Sigmoid colon (tissue), 7 donors: ENCODE measurements at regions of chr22 and their contacts with region 1.

Region 1: DNA sequence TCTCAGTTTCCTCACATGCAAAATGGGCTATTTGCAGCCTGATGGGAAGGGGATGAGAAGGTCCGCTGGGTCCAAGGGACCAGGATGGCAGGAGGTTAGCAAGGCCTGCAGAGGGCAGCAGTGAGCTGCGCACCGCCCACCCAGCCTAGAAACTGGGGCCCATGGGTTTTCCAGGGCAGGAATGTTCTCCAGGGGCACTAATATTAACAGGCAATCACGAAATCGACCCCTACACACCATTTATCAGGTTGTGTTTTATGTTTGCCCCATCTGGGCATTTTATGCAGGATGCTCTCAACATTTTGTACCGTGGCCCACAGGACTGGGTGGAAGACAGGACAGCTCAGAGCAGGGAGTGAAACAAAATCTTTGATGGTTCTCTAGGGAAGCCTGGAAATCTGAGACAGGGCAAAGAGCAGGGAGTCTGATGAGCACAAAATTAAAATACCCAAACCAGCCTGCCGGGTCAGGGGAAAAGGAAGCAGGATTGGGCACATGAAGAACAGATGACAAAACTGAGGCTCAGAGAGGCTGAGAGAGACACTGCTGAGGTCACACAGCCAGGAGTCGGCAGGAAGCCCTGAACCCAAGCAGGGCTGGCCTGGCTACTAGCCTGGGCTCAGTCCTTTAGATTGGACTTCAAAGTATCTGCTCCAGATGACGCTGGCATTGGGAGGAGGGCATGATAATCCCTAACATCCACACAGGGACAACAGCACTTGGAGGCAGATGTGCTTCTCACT is 1.6 kb upstream of the BCR start:
- DNase-seq: peak; percentile 83
- H3K4me3 ChIP-seq: no peak overlapping the region
- H3K27ac ChIP-seq: peak overlapping the region; percentile 81 to 86 (median 85)
- H3K4me1 ChIP-seq: peaks cover 0 to 51% (median 43%) of the 10 kb centered on the region in 4 donors
- H3K27me3 ChIP-seq: no peaks in the 10 kb centered on the region
- CTCF ChIP-seq: peak; percentile 91 to 96 (median 96)
- EP300 ChIP-seq: no peak
- POLR2A ChIP-seq: no peak

Region 2: GRCh38 chr22:23204541-23205157 is 26.0 kb after region 1 on chr22:
- intact Hi-C with region 1: no loop called
- DNase-seq: peak; percentile 79
- H3K4me3 ChIP-seq: no peak overlapping the region
- H3K27ac ChIP-seq: peak overlapping the region; percentile 45 to 72 (median 64)
- H3K4me1 ChIP-seq: peaks cover 0 to 33% (median 24%) of the 10 kb centered on the region in 4 donors
- H3K27me3 ChIP-seq: no peaks in the 10 kb centered on the region
- CTCF ChIP-seq: no peak
- EP300 ChIP-seq: no peak
- POLR2A ChIP-seq: no peak

Region 3: GRCh38 chr22:23281406-23282088 is 102.9 kb after region 1 on chr22:
- intact Hi-C with region 1: loop called (anchors 1 kb)
- DNase-seq: peak; percentile 93
- H3K4me3 ChIP-seq: peak overlapping the region in 2 of 4 donors; percentile 23 to 24
- H3K27ac ChIP-seq: peak overlapping the region; percentile 81 to 91 (median 86)
- H3K4me1 ChIP-seq: peaks cover 0 to 69% (median 57%) of the 10 kb centered on the region in 4 donors
- H3K27me3 ChIP-seq: no peaks in the 10 kb centered on the region
- CTCF ChIP-seq: peak; percentile 97 to 98 (median 97)
- EP300 ChIP-seq: no peak
- POLR2A ChIP-seq: no peak

Region 4: GRCh38 chr22:23373601-23374000 is 194.9 kb after region 1 on chr22:
- intact Hi-C with region 1: no loop called
- DNase-seq: no peak
- H3K4me3 ChIP-seq: no peak overlapping the region
- H3K27ac ChIP-seq: peak overlapping the region in 1 of 4 donors; percentile 40
- H3K4me1 ChIP-seq: peaks cover 0 to 13% (median 0%) of the 10 kb centered on the region in 4 donors
- H3K27me3 ChIP-seq: peaks cover 0 to 5% (median 3%) of the 10 kb centered on the region in 3 donors
- CTCF ChIP-seq: no peak
- EP300 ChIP-seq: no peak
- POLR2A ChIP-seq: no peak

Region 5: GRCh38 chr22:23385291-23386244 is 206.9 kb after region 1 on chr22:
- intact Hi-C with region 1: loop called (anchors 5 kb)
- DNase-seq: peak; percentile 87
- H3K4me3 ChIP-seq: no peak overlapping the region
- H3K27ac ChIP-seq: no peak overlapping the region
- H3K4me1 ChIP-seq: peaks cover 0 to 8% (median 0%) of the 10 kb centered on the region in 4 donors
- H3K27me3 ChIP-seq: peaks cover 0 to 5% (median 0%) of the 10 kb centered on the region in 3 donors
- CTCF ChIP-seq: peak; percentile 88 to 99 (median 98)
- EP300 ChIP-seq: no peak
- POLR2A ChIP-seq: no peak

Region 6: GRCh38 chr22:23521441-23522113 is 342.9 kb after region 1 on chr22:
- intact Hi-C with region 1: loop called (anchors 10 kb)
- DNase-seq: peak; percentile 95
- H3K4me3 ChIP-seq: peak overlapping the region; percentile 28 to 57 (median 45)
- H3K27ac ChIP-seq: peak overlapping the region; percentile 89 to 98 (median 94)
- H3K4me1 ChIP-seq: peaks cover 0 to 38% (median 30%) of the 10 kb centered on the region in 4 donors
- H3K27me3 ChIP-seq: no peaks in the 10 kb centered on the region
- CTCF ChIP-seq: no peak
- EP300 ChIP-seq: peak in 1 of 4 donors; percentile 51
- POLR2A ChIP-seq: no peak